PC-3 (cell line): ENCODE measurements at regions of chr21 and their contacts with region 1.

Region 1: GRCh38 chr21:41167348-41168342 is at the start of gene BACE2:
- DNase-seq: peak; percentile 74
- ATAC-seq: peak; percentile 57
- H3K4me3 ChIP-seq: peak within 1 kb of the TSS; percentile 80
- H3K27ac ChIP-seq: peak within 1 kb of the TSS; percentile 55
- H3K4me1 ChIP-seq: peaks cover 51% of the 10 kb centered on the region
- H3K27me3 ChIP-seq: no peaks in the 10 kb centered on the region
- CTCF ChIP-seq: peak; percentile 64
- total RNA-seq, gene BACE2: 89.2 and 96.2 TPM in 2 replicates

Region 2: GRCh38 chr21:41196636-41197389 is 29.2 kb after region 1 on chr21:
- CTCF ChIA-PET with region 1: no interaction called
- POLR2A ChIA-PET with region 1: no interaction called
- intact Hi-C with region 1: loop called (anchors 2 kb)
- DNase-seq: peak; percentile 37
- ATAC-seq: peak; percentile 50; the same call in 1 of the 2 replicates
- H3K4me3 ChIP-seq: no peak overlapping the region
- H3K27ac ChIP-seq: no peak overlapping the region
- H3K4me1 ChIP-seq: peaks cover 6% of the 10 kb centered on the region; the same call in 1 of the 2 replicates
- H3K27me3 ChIP-seq: no peaks in the 10 kb centered on the region
- CTCF ChIP-seq: no peak

Region 3: DNA sequence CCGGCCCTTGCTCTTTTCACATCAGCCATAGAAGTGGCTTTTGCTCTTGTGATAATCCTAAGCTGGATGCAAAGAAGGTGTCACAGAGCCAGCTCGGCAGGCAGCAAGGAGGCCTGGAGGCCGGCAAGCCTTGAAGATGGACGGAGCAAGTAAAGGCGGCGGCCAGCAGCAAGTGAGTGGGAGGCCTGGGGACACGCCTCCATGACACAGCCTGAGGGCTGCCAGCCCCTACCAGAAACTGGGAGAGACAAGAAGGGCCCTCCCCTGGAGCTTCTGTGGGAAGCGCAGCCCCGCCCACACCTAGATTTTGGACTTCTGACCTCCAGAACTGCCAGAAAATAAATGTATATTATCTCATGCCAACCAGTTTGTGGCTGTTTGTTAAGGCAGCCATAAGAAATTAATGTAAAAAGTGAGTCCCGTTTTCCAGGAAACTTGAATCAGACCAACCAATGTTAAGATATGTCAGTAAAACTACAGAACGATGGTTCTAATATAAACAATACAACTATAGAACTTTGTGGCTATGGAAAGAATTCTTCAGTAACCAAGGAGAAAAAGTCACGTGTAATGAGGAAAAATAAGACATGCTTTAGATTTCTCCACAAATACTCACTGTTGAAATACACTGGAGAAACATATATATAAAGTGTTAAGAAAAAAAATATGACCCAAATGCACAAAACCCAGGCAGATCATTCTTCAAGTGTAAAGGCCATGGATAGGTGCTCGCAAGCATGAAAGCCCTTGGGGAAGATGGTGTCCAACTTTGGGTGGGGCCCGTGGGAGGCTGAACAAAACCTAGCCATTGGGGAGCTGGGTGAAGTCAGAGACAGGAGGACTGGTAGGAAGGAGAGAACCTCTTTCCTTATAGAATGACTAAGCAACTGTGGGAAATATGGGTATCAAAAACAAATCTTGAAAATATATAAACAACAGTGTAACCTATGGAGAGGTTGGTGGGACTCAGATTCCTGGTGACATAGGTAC is 50.3 kb after region 1 on chr21:
- CTCF ChIA-PET with region 1: no interaction called
- POLR2A ChIA-PET with region 1: no interaction called
- intact Hi-C with region 1: loop called (anchors 5 kb)
- DNase-seq: no peak
- ATAC-seq: no peak
- H3K4me3 ChIP-seq: no peak overlapping the region
- H3K27ac ChIP-seq: no peak overlapping the region
- H3K4me1 ChIP-seq: peaks cover 15% of the 10 kb centered on the region
- H3K27me3 ChIP-seq: no peaks in the 10 kb centered on the region
- CTCF ChIP-seq: no peak

Region 4: GRCh38 chr21:41258617-41259016 is 91.0 kb after region 1 on chr21:
- CTCF ChIA-PET with region 1: no interaction called
- POLR2A ChIA-PET with region 1: no interaction called
- intact Hi-C with region 1: loop called (anchors 1 kb)
- DNase-seq: peak; percentile 97
- ATAC-seq: peak; percentile 87
- H3K4me3 ChIP-seq: no peak overlapping the region
- H3K27ac ChIP-seq: peak overlapping the region; percentile 77
- H3K4me1 ChIP-seq: peaks cover 41% of the 10 kb centered on the region
- H3K27me3 ChIP-seq: no peaks in the 10 kb centered on the region
- CTCF ChIP-seq: no peak

Region 5: DNA sequence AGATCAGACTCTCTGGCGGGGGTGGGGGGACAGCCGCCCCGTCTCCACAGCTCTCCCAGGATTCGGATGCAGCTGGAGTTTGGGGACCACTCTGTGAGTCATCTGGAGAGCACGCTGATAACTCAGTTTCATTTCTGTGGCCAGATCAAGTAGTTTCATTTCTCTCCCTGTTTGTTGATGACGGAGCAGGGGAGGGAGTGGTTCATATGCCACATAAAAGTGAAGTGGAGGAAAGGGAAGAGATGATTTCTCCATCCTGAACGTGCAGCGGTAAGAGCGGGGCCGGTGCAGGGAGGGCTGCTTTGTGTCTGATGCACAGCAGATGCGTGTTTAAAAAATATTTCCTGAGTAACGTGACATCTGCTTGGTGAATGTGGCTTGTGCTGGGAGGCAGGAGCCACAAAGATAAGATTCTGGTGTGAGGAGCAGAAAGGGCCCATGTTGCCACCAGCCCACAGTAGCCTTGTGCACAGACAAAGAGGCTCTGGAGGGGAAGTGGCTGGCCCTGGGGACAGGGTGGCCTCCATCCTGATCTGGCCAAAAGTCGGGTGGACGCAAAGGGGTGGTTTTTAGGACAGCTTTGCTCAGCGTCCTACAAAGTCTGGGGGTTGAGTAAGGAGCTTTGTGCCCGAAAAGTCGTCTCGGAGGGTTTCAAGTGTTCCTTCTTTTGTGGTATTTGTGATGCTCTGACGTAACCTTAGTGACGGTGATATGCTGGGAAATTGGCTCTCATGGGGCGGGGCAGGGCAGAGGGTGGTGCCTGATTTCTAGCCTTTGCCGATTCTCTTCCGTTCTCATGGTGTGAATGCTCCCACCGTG is 194.3 kb after region 1 on chr21 and contains the start of gene MX2:
- CTCF ChIA-PET with region 1: no interaction called
- POLR2A ChIA-PET with region 1: no interaction called
- intact Hi-C with region 1: loop called (anchors 5 kb)
- DNase-seq: peak; percentile 48
- ATAC-seq: peak; percentile 25
- H3K4me3 ChIP-seq: peak within 1 kb of the TSS; percentile 25; the same call in 1 of the 2 replicates
- H3K27ac ChIP-seq: no peak within 1 kb of the TSS
- H3K4me1 ChIP-seq: peaks cover 9% of the 10 kb centered on the region
- H3K27me3 ChIP-seq: peaks cover 4% of the 10 kb centered on the region
- CTCF ChIP-seq: no peak
- total RNA-seq, gene MX2: 0.15 and 0.46 TPM in 2 replicates

Region 6: GRCh38 chr21:41419911-41420862 is 252.5 kb after region 1 on chr21:
- CTCF ChIA-PET with region 1: no interaction called
- POLR2A ChIA-PET with region 1: no interaction called
- intact Hi-C with region 1: loop called (anchors 5 kb)
- DNase-seq: peak; percentile 89
- ATAC-seq: peak; percentile 90
- H3K4me3 ChIP-seq: peak overlapping the region; percentile 70
- H3K27ac ChIP-seq: peak overlapping the region; percentile 54
- H3K4me1 ChIP-seq: no peaks in the 10 kb centered on the region; the same call in none of the 2 replicates
- H3K27me3 ChIP-seq: no peaks in the 10 kb centered on the region
- CTCF ChIP-seq: no peak